ENCODE measurements at regions of chr12 and their contacts with region 1.

Region 1: GRCh38 chr12:117367011-117367638 is 5.7 kb upstream of the NOS1 start:
- DNase-seq: peak; percentile 38
- ATAC-seq: peak; percentile 71

Region 2: GRCh38 chr12:117236456-117237001 is 130.6 kb before region 1 on chr12:
- intact Hi-C with region 1: loop called (anchors 5 kb)
- DNase-seq: peak; percentile 89
- ATAC-seq: peak; percentile 65

Region 3: DNA sequence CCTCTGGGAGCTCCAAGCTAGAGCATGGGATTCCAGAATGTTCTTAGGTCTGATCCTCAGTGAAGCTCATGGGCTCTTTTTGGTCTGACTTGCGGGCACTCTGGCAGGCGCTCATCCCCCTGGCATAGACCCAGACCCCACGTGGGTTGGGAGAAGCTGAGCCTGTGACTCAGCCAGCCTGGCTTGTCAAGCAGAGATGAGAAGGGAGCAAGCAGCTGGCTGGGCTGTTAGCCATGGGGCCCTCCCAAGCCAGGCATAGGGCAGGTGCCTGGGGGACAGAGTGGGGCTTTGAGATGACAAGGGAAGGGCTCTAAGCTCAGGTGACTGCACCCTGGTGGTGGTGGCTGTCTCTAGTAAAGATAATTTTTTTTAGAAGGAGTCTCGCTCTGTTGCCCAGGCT is 74.6 kb after region 1 on chr12:
- intact Hi-C with region 1: no loop called
- DNase-seq: peak; percentile 74
- ATAC-seq: peak; percentile 88

Region 4: DNA sequence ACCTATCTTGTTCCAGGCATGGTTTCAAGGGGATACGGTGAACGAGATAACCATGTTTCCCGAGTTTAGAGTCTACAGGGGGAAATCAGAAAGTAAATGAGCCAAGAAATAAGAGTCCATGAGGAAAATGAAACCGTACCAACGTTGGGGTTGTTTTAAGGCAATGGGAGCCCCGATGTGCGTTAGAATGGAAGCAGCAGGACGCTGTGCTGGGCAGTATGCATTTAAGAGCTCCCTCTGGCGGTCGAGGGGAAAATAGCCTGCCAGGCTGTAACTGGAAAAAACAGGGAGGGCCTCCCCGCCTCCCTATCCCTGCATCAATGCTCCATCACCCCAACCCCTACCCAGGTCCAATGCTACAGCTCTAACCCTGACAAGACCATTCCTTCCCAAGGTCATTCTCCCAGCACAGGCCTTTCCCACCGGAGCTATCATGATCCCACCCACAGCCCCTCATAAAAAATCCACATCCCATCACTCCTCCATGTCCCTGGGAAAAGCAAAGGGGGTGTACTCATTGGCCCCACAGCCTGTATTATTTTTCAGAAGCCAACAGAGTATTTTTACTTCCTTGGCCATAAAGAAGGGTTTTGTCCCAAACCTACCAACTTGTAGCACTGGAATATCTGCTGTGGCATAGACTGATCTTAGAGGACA is 220.6 kb after region 1 on chr12:
- intact Hi-C with region 1: loop called (anchors 5 kb)
- DNase-seq: peak; percentile 54
- ATAC-seq: peak; percentile 56

Region 5: DNA sequence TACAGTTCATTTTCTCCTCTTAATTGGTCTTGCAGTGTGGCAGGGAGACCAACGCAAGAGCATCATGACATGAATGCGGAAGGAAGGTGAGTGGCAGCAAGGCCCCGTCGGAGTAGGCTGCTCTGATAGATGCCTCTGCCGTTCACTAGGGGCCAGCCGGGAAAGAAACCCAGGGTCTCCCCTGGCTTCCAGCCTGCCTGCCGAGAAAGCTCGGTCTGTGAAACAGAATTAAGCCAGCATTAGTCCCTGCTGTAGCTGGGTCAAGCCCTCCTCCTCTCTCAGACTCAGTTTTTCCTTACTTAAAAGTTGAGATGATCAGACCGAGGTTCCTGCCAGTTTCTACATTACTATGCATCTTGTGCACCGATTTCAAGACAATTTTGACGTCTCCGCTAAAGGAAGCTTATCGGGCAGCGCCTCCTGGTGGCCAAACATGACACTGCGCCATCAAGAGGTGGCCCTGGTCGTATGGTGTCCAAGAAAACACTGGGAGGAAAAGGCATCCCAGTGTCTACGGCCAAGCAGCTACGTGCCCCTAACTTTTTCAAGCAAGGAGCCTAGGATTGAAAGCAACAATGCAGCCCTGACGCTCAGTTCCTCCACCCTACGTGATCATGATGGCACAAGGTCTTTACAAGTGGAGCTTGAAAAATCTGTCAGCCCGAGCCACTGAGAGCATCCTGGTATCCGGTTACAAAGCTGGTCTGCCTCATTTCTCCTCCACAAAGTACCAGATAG is 470.0 kb after region 1 on chr12:
- intact Hi-C with region 1: loop called (anchors 5 kb)
- DNase-seq: peak; percentile 84
- ATAC-seq: peak; percentile 62

Region 6: DNA sequence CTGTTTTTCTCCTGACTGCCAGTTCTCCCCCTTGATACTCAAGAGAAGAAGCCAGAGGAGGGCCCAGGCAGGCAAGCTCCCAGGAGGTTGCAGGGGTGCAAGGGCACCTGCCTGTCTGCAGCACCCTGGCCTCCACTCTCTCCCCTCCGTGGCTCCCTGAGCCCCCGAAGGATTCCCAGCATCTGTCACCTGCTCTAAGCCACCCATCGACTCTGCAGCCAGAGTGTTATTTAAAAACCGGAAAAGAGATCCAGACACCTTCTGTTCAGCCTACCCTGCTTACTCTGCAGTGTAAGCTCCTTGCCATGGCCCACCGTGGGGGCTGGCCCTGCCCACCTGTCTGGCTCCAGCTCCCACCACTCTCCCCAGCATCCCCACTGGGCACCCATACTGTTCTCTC is 480.2 kb after region 1 on chr12:
- intact Hi-C with region 1: no loop called
- DNase-seq: no peak
- ATAC-seq: no peak